Sigmoid colon (tissue), 7 donors: ENCODE measurements at regions of chr14 and their contacts with region 1.

Region 1: DNA sequence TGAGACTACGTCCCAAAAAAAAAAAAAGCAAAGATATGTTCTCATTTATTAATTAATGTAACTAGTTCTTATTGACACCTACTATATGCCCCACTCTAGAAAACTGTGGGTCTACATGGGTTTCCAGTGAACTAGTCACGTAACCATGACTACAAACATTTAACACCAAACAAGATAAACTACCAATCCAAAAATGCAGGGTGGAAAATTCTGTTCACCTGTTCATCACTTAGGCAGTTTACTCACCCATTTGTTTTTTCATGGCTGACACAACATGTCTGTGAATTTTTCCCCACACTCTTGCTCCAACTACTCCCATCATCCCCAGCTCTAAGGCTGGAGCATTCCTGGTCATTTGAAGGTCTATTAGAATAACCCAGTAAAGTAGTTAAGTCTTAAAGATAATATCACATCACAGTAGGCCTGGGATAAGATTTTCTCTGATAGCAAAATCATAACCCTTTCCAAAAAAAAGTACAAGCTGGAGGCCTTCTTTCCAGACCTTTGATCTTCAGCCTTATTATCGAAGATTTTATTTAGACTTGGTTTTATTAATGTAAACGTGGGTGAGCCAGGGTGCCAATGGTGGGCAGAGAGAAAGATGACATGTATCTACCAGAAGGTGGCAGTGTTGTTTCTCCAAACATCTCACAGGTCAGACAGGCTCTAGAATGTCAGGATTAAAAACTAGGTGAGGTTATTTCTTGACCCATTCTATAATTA is 61.6 kb upstream of the DAAM1 start:
- DNase-seq: no peak
- H3K4me3 ChIP-seq: no peak overlapping the region
- H3K27ac ChIP-seq: no peak overlapping the region
- H3K4me1 ChIP-seq: peaks cover 0 to 24% (median 9%) of the 10 kb centered on the region in 4 donors
- H3K27me3 ChIP-seq: no peaks in the 10 kb centered on the region
- CTCF ChIP-seq: peak; percentile 56 to 82 (median 72)
- EP300 ChIP-seq: no peak
- POLR2A ChIP-seq: no peak

Region 2: GRCh38 chr14:58138031-58138713 is 988.7 kb before region 1 on chr14:
- intact Hi-C with region 1: no loop called
- DNase-seq: no peak
- H3K4me3 ChIP-seq: no peak overlapping the region
- H3K27ac ChIP-seq: no peak overlapping the region
- H3K4me1 ChIP-seq: peaks cover 0 to 7% (median 0%) of the 10 kb centered on the region in 4 donors
- H3K27me3 ChIP-seq: no peaks in the 10 kb centered on the region
- CTCF ChIP-seq: no peak
- EP300 ChIP-seq: no peak
- POLR2A ChIP-seq: no peak

Region 3: GRCh38 chr14:58501214-58501816 is 625.6 kb before region 1 on chr14:
- intact Hi-C with region 1: loop called (anchors 2 kb)
- DNase-seq: no peak
- H3K4me3 ChIP-seq: no peak overlapping the region
- H3K27ac ChIP-seq: no peak overlapping the region
- H3K4me1 ChIP-seq: no peaks in the 10 kb centered on the region
- H3K27me3 ChIP-seq: no peaks in the 10 kb centered on the region
- CTCF ChIP-seq: peak; percentile 63 to 85 (median 78)
- EP300 ChIP-seq: no peak
- POLR2A ChIP-seq: no peak

Region 4: GRCh38 chr14:59428581-59429012 is 301.7 kb after region 1 on chr14:
- intact Hi-C with region 1: loop called (anchors 5 kb)
- DNase-seq: no peak
- H3K4me3 ChIP-seq: no peak overlapping the region
- H3K27ac ChIP-seq: peak overlapping the region; percentile 41 to 70 (median 61)
- H3K4me1 ChIP-seq: peaks cover 0 to 31% (median 21%) of the 10 kb centered on the region in 4 donors
- H3K27me3 ChIP-seq: no peaks in the 10 kb centered on the region
- CTCF ChIP-seq: peak; percentile 30 to 34 (median 32)
- EP300 ChIP-seq: no peak
- POLR2A ChIP-seq: no peak

Region 5: GRCh38 chr14:59439256-59439965 is 312.5 kb after region 1 on chr14:
- intact Hi-C with region 1: loop called (anchors 1 kb)
- DNase-seq: no peak
- H3K4me3 ChIP-seq: no peak overlapping the region
- H3K27ac ChIP-seq: peak overlapping the region in 1 of 4 donors; percentile 54
- H3K4me1 ChIP-seq: peaks cover 0 to 4% (median under 1%) of the 10 kb centered on the region in 4 donors
- H3K27me3 ChIP-seq: no peaks in the 10 kb centered on the region
- CTCF ChIP-seq: no peak
- EP300 ChIP-seq: no peak
- POLR2A ChIP-seq: no peak

Region 6: GRCh38 chr14:59576332-59577294 is 449.7 kb after region 1 on chr14 and contains the start of gene CCDC175:
- intact Hi-C with region 1: loop called (anchors 5 kb)
- DNase-seq: peak; percentile 84
- H3K4me3 ChIP-seq: peak within 1 kb of the TSS; percentile 10 to 46 (median 38)
- H3K27ac ChIP-seq: no peak within 1 kb of the TSS
- H3K4me1 ChIP-seq: peaks cover 0 to 9% (median 7%) of the 10 kb centered on the region in 4 donors
- H3K27me3 ChIP-seq: no peaks in the 10 kb centered on the region
- CTCF ChIP-seq: peak; percentile 10 to 64 (median 31)
- EP300 ChIP-seq: no peak
- POLR2A ChIP-seq: no peak
- total RNA-seq, gene CCDC175: not detected